H1 (cell line): ENCODE measurements at regions of chr1 and their contacts with region 1.

Region 1: GRCh38 chr1:179081687-179082332 is at the start of gene TOR3A:
- DNase-seq: peak; percentile 79 to 93
- H3K4me3 ChIP-seq: peak within 1 kb of the TSS; percentile 55 to 74 (median 70)
- H3K27ac ChIP-seq: 0 out of 2 replicates have a peak within 1 kb of the TSS, but pooled peaks have one; percentile 35
- H3K4me1 ChIP-seq: peaks cover 0 to 11% (median 4%) of the 10 kb centered on the region in 4 experiments; a peak in 6 of 7 replicates
- H3K27me3 ChIP-seq: no peaks in the 10 kb centered on the region
- CTCF ChIP-seq: no peak
- EP300 ChIP-seq: peak in 1 of 2 experiments; percentile 32; a peak in 1 of 3 replicates
- POLR2A ChIP-seq: peak in 1 of 2 experiments; percentile 63; a peak in 2 of 3 replicates
- RAD21 ChIP-seq: no peak
- total RNA-seq, gene TOR3A: 19.9 and 21.4 TPM in 2 replicates

Region 2: GRCh38 chr1:179066471-179066870 is 15.3 kb before region 1 on chr1:
- CTCF ChIA-PET with region 1: interaction called, 19 read pairs
- POLR2A ChIA-PET with region 1: no interaction called
- DNase-seq: no peak
- H3K4me3 ChIP-seq: no peak overlapping the region
- H3K27ac ChIP-seq: no peak overlapping the region
- H3K4me1 ChIP-seq: no peaks in the 10 kb centered on the region
- H3K27me3 ChIP-seq: no peaks in the 10 kb centered on the region
- CTCF ChIP-seq: no peak
- EP300 ChIP-seq: no peak
- POLR2A ChIP-seq: no peak
- RAD21 ChIP-seq: no peak

Region 3: GRCh38 chr1:179105350-179105749 is 23.5 kb after region 1 on chr1:
- CTCF ChIA-PET with region 1: interaction called, 41 read pairs
- POLR2A ChIA-PET with region 1: interaction called, 4 read pairs
- DNase-seq: peak in 1 of 2 experiments; percentile 50
- H3K4me3 ChIP-seq: no peak overlapping the region
- H3K27ac ChIP-seq: no peak overlapping the region
- H3K4me1 ChIP-seq: no peaks in the 10 kb centered on the region
- H3K27me3 ChIP-seq: no peaks in the 10 kb centered on the region
- CTCF ChIP-seq: peak; percentile 55 to 90 (median 84)
- EP300 ChIP-seq: no peak
- POLR2A ChIP-seq: no peak
- RAD21 ChIP-seq: peak; percentile 75 to 78

Region 4: GRCh38 chr1:179142889-179143299 is 61.1 kb after region 1 on chr1:
- CTCF ChIA-PET with region 1: no interaction called
- POLR2A ChIA-PET with region 1: no interaction called
- DNase-seq: no peak
- H3K4me3 ChIP-seq: no peak overlapping the region
- H3K27ac ChIP-seq: no peak overlapping the region
- H3K4me1 ChIP-seq: peaks cover 0 to 4% (median 0%) of the 10 kb centered on the region in 4 experiments; a peak in 1 of 7 replicates
- H3K27me3 ChIP-seq: no peaks in the 10 kb centered on the region
- CTCF ChIP-seq: no peak
- EP300 ChIP-seq: no peak
- POLR2A ChIP-seq: no peak
- RAD21 ChIP-seq: no peak

Region 5: GRCh38 chr1:179365320-179366092 is 283.7 kb after region 1 on chr1 and contains the start of gene AXDND1:
- CTCF ChIA-PET with region 1: interaction called, 13 read pairs
- POLR2A ChIA-PET with region 1: no interaction called
- DNase-seq: peak; percentile 5 to 87
- H3K4me3 ChIP-seq: peak within 1 kb of the TSS; percentile 83 to 91 (median 87)
- H3K27ac ChIP-seq: peak within 1 kb of the TSS; percentile 86
- H3K4me1 ChIP-seq: no peaks in the 10 kb centered on the region
- H3K27me3 ChIP-seq: no peaks in the 10 kb centered on the region
- CTCF ChIP-seq: peak in 1 of 3 experiments; percentile 7; a peak in 1 of 4 replicates
- EP300 ChIP-seq: no peak
- POLR2A ChIP-seq: peak in 1 of 2 experiments; percentile 51; a peak in 1 of 3 replicates
- RAD21 ChIP-seq: no peak; a peak in 1 of 4 replicates
- total RNA-seq, gene AXDND1: 0.38 and 0.61 TPM in 2 replicates